ENCODE measurements at regions of chr9 and their contacts with region 1.

Region 1: DNA sequence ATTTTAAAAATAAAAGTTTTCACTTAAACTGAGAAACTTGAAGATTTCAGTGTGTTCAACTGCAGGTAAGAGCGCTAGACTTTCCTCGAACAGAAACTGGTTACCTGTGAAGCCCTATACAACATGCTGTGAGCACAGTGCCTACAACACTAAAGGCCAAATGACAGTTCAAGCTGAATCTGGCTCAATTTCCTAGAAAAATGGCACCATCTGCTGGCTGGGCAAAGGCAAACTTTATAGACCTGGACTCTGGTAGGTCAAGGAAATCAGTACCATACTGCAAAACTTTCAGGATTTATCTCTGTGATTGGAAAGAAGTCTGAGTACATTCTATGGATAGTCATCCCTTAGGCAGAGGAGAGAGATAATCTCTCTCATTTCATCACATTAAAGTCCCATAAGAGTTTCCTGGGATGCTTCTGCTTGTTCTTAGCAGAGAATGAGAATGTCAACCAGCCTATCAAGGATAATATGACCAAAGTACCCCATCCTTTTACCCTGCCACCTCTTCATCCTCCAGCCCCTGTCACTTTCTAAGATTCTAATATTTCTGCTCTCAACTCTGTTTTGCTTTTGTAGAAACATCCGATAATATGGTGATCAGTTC is 31.8 kb upstream of the FOXB2 start:
- DNase-seq: peak; percentile 65
- H3K4me3 ChIP-seq: no peak overlapping the region
- H3K27ac ChIP-seq: no peak overlapping the region
- H3K4me1 ChIP-seq: no peaks in the 10 kb centered on the region
- H3K27me3 ChIP-seq: peaks cover 12% of the 10 kb centered on the region; the same call in 1 of the 2 replicates

Region 2: GRCh38 chr9:76798527-76798926 is 189.2 kb before region 1 on chr9:
- in situ Hi-C with region 1: loop called (anchors 25 kb)
- DNase-seq: no peak
- H3K4me3 ChIP-seq: no peak overlapping the region
- H3K27ac ChIP-seq: no peak overlapping the region
- H3K4me1 ChIP-seq: no peaks in the 10 kb centered on the region
- H3K27me3 ChIP-seq: peaks cover 6% of the 10 kb centered on the region; the same call in 1 of the 2 replicates

Region 3: DNA sequence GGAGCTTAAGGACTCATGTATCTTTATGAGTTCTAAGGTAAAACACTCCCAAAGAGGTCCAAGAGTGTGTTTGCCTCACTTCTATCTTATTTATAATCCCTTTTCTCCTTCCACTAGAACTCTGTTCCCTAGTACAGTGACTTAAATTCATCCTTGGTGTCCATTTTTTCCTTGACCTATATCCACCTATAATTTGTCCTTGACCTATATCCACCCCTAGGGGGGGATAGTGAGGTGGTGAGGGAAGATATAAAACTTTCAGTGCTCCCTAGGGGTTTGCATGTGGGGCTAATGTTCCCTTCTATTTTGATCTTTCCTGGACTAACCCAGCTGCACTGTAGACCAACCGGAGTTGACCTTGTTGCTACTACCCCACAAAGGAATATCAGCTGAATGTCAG is 1127.4 kb after region 1 on chr9:
- in situ Hi-C with region 1: no loop called
- DNase-seq: peak; percentile 19
- H3K4me3 ChIP-seq: no peak overlapping the region
- H3K27ac ChIP-seq: no peak overlapping the region
- H3K4me1 ChIP-seq: peaks cover 14% of the 10 kb centered on the region
- H3K27me3 ChIP-seq: no peaks in the 10 kb centered on the region